Caco-2 (cell line): ENCODE measurements at regions of chr2 and their contacts with region 1.

Region 1: GRCh38 chr2:43877782-43878464 is 39.2 kb downstream of the ABCG8 start:
- DNase-seq: peak; percentile 75 to 83
- H3K4me3 ChIP-seq: no peak overlapping the region
- H3K4me3 Mint-ChIP-seq: no peak overlapping the region
- H3K27ac Mint-ChIP-seq: no peak overlapping the region
- H3K4me1 ChIP-seq: no peaks in the 10 kb centered on the region; the same call in 1 of the 2 replicates
- H3K4me1 Mint-ChIP-seq: peaks cover 10% of the 10 kb centered on the region
- H3K27me3 ChIP-seq: no peaks in the 10 kb centered on the region
- H3K27me3 Mint-ChIP-seq: peaks cover 3% of the 10 kb centered on the region
- CTCF ChIP-seq: peak; percentile 95 to 96

Region 2: GRCh38 chr2:43611987-43612894 is 265.7 kb before region 1 on chr2:
- CTCF ChIA-PET with region 1: no interaction called
- POLR2A ChIA-PET with region 1: no interaction called
- intact Hi-C with region 1: loop called (anchors 2 kb)
- DNase-seq: peak; percentile 74 to 84
- H3K4me3 ChIP-seq: no peak overlapping the region
- H3K4me3 Mint-ChIP-seq: no peak overlapping the region
- H3K27ac Mint-ChIP-seq: no peak overlapping the region
- H3K4me1 ChIP-seq: no peaks in the 10 kb centered on the region
- H3K4me1 Mint-ChIP-seq: peaks cover 18% of the 10 kb centered on the region
- H3K27me3 ChIP-seq: no peaks in the 10 kb centered on the region; the same call in 1 of the 2 replicates
- H3K27me3 Mint-ChIP-seq: peaks cover 2% of the 10 kb centered on the region
- CTCF ChIP-seq: peak; percentile 87 to 88

Region 3: GRCh38 chr2:43802135-43802534 is 75.8 kb before region 1 on chr2:
- CTCF ChIA-PET with region 1: interaction called, 3 read pairs
- POLR2A ChIA-PET with region 1: no interaction called
- intact Hi-C with region 1: loop called (anchors 1 kb)
- DNase-seq: no peak
- H3K4me3 ChIP-seq: no peak overlapping the region
- H3K4me3 Mint-ChIP-seq: no peak overlapping the region
- H3K27ac Mint-ChIP-seq: no peak overlapping the region
- H3K4me1 ChIP-seq: peaks cover 12% of the 10 kb centered on the region; the same call in 1 of the 2 replicates
- H3K4me1 Mint-ChIP-seq: peaks cover 9% of the 10 kb centered on the region
- H3K27me3 ChIP-seq: no peaks in the 10 kb centered on the region
- H3K27me3 Mint-ChIP-seq: no peaks in the 10 kb centered on the region
- CTCF ChIP-seq: no peak

Region 4: GRCh38 chr2:43898134-43898837 is 20.4 kb after region 1 on chr2:
- CTCF ChIA-PET with region 1: interaction called, 4 read pairs
- POLR2A ChIA-PET with region 1: no interaction called
- intact Hi-C with region 1: loop called (anchors 2 kb)
- DNase-seq: peak in 1 of 2 experiments; percentile 52
- H3K4me3 ChIP-seq: no peak overlapping the region
- H3K4me3 Mint-ChIP-seq: no peak overlapping the region
- H3K27ac Mint-ChIP-seq: no peak overlapping the region
- H3K4me1 ChIP-seq: no peaks in the 10 kb centered on the region
- H3K4me1 Mint-ChIP-seq: no peaks in the 10 kb centered on the region
- H3K27me3 ChIP-seq: no peaks in the 10 kb centered on the region
- H3K27me3 Mint-ChIP-seq: no peaks in the 10 kb centered on the region
- CTCF ChIP-seq: peak; percentile 12 to 47